ENCODE measurements at regions of chr6 and their contacts with region 1.

Region 1: DNA sequence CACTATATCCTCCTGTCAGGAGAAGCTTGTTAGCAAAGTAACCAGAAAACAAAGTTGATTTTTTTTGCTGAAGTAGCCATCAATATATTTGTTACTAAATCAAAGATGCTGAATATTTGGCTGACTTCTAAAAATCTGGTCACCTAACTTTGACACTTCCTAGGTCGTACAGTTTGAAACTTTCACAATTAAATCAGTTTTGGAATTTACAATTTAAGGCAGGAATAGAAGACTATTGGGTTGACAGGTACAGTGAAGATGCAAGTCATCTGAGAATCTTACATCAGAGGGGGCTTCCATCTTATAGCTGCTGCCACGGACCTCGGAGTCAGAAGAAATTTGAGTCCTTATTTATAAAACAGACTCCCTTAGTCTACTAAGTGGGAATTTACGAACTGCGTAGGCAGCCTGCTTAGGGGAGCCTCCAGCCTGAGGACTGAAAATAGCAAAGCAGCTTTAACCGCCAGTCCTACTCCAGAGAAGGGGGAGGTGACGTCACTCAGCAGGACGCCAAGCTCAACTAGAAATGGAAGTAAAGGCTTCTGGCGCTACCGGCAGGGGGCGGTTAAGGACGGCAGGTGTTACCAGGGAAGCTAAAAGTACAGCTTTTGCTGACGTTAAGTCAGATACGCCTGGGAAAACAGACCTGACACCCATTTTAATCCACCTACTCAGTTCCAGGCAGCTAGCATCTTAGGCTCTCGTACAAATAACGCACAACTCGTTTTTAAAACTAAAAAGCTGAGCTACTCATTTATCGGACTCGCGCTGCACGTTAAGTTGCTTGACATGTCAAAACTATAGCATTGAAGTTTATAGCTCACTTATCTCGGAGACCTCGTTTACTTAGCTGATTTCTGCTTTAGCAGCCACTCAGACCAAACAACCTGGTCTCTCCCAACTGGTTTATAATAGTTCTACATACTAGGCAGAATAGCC is 61.1 kb upstream of the HFE start:
- DNase-seq: peak; percentile 97
- ATAC-seq: peak; percentile 68
- H3K4me3 ChIP-seq: peak overlapping the region; percentile 59 to 80 (median 71)
- H3K27ac ChIP-seq: peak overlapping the region; percentile 93
- H3K4me1 ChIP-seq: peaks cover 62% of the 10 kb centered on the region
- H3K27me3 ChIP-seq: no peaks in the 10 kb centered on the region; a peak in 1 of 5 replicates
- CTCF ChIP-seq: peak; percentile 95
- EP300 ChIP-seq: peak in 1 of 2 experiments; percentile 54; a peak in 2 of 4 replicates
- POLR2A ChIP-seq: peak in 1 of 2 experiments; percentile 28; a peak in 1 of 4 replicates
- RAD21 ChIP-seq: peak; percentile 77

Region 2: GRCh38 chr6:24936641-24937317 is 1089.4 kb before region 1 on chr6:
- CTCF ChIA-PET with region 1: no interaction called
- POLR2A ChIA-PET with region 1: no interaction called
- in situ Hi-C with region 1: no loop called
- intact Hi-C with region 1: no loop called
- DNase-seq: no peak
- ATAC-seq: no peak
- H3K4me3 ChIP-seq: no peak overlapping the region
- H3K27ac ChIP-seq: no peak overlapping the region
- H3K4me1 ChIP-seq: no peaks in the 10 kb centered on the region
- H3K27me3 ChIP-seq: peaks cover 0 to 10% of the 10 kb centered on the region in 2 experiments; a peak in 2 of 5 replicates
- CTCF ChIP-seq: no peak
- EP300 ChIP-seq: no peak
- POLR2A ChIP-seq: no peak
- RAD21 ChIP-seq: no peak

Region 3: DNA sequence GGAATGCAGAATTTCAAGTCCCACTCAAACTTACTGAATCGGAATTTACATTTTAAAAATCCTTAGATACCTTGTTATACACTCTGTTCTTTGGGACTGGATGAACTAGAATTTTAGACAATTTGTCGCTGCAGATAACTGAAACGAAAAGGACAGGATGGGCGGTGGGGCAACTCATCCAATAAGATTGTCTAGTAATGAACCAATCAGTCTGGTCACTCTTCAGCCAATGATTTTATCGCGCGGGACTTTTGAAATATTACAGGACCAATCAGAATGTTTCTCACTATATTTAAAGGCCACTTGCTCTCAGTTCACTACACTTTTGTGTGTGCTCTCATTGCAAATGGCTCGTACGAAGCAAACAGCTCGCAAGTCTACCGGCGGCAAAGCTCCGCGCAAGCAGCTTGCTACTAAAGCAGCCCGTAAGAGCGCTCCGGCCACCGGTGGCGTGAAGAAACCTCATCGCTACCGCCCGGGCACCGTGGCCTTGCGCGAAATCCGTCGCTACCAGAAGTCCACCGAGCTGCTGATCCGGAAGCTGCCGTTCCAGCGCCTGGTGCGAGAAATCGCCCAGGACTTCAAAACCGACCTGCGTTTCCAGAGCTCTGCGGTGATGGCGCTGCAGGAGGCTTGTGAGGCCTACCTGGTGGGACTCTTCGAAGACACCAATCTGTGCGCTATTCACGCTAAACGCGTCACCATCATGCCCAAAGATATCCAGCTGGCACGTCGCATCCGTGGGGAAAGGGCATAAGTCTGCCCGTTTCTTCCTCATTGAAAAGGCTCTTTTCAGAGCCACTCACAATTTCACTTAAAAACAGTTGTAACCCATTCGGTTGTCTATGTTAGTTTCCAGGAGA is 19.1 kb after region 1 on chr6:
- CTCF ChIA-PET with region 1: no interaction called
- POLR2A ChIA-PET with region 1: interaction called, 322 read pairs
- in situ Hi-C with region 1: no loop called
- intact Hi-C with region 1: loop called (anchors 1 kb)
- DNase-seq: peak; percentile 99
- ATAC-seq: peak; percentile 74
- H3K4me3 ChIP-seq: peak overlapping the region; percentile 58 to 73 (median 63)
- H3K27ac ChIP-seq: peak overlapping the region; percentile 94
- H3K4me1 ChIP-seq: peaks cover 31% of the 10 kb centered on the region
- H3K27me3 ChIP-seq: no peaks in the 10 kb centered on the region; a peak in 1 of 5 replicates
- CTCF ChIP-seq: peak; percentile 62
- EP300 ChIP-seq: peak in 1 of 2 experiments; percentile 44; a peak in 2 of 4 replicates
- POLR2A ChIP-seq: peak; percentile 98 to 100
- RAD21 ChIP-seq: peak; percentile 69

Region 4: DNA sequence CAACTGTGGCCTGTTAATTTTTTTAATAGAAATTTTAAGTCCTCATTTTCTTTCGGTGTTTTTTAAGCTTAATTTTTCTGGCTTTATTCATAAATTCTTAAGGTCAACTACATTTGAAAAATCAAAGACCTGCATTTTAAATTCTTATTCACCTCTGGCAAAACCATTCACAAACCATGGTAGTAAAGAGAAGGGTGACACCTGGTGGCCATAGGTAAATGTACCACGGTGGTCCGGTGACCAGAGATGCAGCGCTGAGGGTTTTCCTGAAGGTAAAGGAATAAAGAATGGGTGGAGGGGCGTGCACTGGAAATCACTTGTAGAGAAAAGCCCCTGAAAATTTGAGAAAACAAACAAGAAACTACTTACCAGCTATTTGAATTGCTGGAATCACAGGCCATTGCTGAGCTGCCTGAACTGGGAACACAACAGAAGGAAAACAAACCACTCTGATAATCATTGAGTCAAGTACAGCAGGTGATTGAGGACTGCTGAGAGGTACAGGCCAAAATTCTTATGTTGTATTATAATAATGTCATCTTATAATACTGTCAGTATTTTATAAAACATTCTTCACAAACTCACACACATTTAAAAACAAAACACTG is 71.2 kb after region 1 on chr6:
- CTCF ChIA-PET with region 1: interaction called, 4 read pairs
- POLR2A ChIA-PET with region 1: interaction called, 3 read pairs
- in situ Hi-C with region 1: no loop called
- intact Hi-C with region 1: loop called (anchors 1 kb)
- DNase-seq: peak; percentile 75
- ATAC-seq: peak; percentile 93
- H3K4me3 ChIP-seq: no peak overlapping the region
- H3K27ac ChIP-seq: no peak overlapping the region
- H3K4me1 ChIP-seq: peaks cover 1% of the 10 kb centered on the region
- H3K27me3 ChIP-seq: no peaks in the 10 kb centered on the region
- CTCF ChIP-seq: peak; percentile 86
- EP300 ChIP-seq: no peak
- POLR2A ChIP-seq: no peak
- RAD21 ChIP-seq: peak; percentile 82

Region 5: DNA sequence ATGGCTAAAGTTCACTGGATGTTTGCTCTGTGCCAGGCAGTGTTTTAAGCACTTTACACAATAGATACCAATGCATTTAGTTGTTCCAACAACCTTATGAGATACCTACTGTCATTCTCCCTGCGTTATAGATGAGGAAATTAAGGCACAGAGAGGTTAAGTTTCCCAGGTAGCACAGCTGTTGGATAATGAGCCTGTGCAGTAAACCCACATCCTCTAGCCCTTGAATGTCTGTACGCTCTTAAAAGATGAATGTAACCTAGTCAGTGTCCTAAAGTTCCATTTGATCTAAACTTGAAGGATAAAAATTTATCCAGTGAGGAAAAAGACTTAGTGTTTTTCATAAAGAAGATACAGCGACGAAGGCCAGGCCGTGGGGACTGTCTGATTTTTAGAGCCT is 89.1 kb after region 1 on chr6:
- CTCF ChIA-PET with region 1: no interaction called
- POLR2A ChIA-PET with region 1: no interaction called
- in situ Hi-C with region 1: no loop called
- intact Hi-C with region 1: no loop called
- DNase-seq: no peak
- ATAC-seq: no peak
- H3K4me3 ChIP-seq: no peak overlapping the region
- H3K27ac ChIP-seq: no peak overlapping the region
- H3K4me1 ChIP-seq: peaks cover 35% of the 10 kb centered on the region
- H3K27me3 ChIP-seq: no peaks in the 10 kb centered on the region
- CTCF ChIP-seq: no peak
- EP300 ChIP-seq: no peak
- POLR2A ChIP-seq: no peak
- RAD21 ChIP-seq: no peak

Region 6: DNA sequence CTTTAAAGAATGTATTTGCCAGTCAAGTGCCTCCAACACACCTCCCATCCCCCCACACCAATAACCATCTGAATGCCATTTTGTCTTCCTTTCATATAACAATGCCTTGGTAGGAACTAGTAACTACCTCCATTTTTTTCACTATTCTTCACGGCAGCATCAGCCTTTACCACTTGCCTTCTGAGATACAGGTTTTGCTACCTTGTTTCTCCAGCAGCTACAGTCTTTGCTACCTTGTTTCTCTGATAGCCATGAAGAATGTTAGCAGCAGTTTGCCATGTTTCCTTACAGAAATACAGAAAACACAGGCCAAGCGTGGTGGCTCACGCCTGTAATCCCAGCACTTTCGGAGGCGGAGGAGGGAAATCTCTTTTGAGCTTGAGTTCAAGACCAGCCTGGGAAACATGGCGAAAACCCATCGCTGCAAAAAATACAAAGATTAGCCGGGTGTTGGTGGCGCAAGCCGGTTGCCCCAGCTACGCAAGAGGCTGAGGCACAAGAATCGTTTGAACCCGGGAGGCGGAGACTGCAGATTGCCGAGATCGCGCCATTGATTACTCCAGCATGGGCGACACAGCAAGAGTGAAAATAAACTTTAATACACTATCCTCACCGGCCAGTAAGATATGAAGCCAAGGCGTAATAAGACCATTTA is 161.9 kb after region 1 on chr6:
- CTCF ChIA-PET with region 1: no interaction called
- POLR2A ChIA-PET with region 1: interaction called, 12 read pairs
- in situ Hi-C with region 1: no loop called
- intact Hi-C with region 1: no loop called
- DNase-seq: peak; percentile 76
- ATAC-seq: peak; percentile 63
- H3K4me3 ChIP-seq: peak overlapping the region; percentile 60 to 77 (median 62)
- H3K27ac ChIP-seq: peak overlapping the region; percentile 82
- H3K4me1 ChIP-seq: peaks cover 18% of the 10 kb centered on the region
- H3K27me3 ChIP-seq: no peaks in the 10 kb centered on the region
- CTCF ChIP-seq: no peak
- EP300 ChIP-seq: no peak
- POLR2A ChIP-seq: no peak
- RAD21 ChIP-seq: no peak

Region 7: DNA sequence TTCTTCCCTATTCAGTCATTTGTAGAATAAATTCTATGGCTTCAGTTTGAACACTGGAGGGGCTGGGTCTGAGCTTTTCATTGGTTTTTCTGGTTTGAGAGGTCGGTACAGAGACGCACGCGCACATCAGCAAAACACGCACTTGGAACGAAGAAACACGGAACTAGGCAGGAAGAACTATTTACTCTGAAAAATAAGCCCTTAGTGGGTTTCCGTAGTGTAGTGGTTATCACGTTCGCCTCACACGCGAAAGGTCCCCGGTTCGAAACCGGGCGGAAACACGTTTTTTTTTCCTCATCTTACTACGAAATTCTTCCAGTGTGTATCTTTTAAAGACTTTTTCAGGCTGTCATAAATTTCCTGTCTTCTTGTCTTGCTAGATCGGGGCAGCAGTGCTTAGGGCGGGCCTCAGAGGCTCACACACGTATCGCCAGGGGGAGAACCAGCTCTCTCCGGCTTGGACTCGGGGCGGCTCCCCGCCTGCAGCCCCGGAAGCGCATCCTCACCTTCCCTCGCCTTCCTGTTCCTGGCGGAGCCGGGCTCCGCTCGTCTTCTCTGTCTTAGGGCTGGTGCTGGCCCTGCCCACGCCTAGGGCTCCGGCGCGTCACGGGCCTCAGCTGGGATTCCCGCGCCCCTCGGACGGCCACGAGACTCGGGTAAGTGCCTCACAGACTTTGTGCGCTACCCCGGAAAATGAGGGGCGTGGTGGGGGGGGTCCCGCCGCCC is 511.8 kb after region 1 on chr6 and contains the start of gene HMGN4:
- CTCF ChIA-PET with region 1: no interaction called
- POLR2A ChIA-PET with region 1: no interaction called
- in situ Hi-C with region 1: no loop called
- intact Hi-C with region 1: loop called (anchors 10 kb)
- DNase-seq: peak; percentile 92
- ATAC-seq: peak; percentile 85
- H3K4me3 ChIP-seq: peak within 1 kb of the TSS; percentile 83 to 89 (median 83)
- H3K27ac ChIP-seq: peak within 1 kb of the TSS; percentile 74
- H3K4me1 ChIP-seq: peaks cover 39% of the 10 kb centered on the region
- H3K27me3 ChIP-seq: no peaks in the 10 kb centered on the region
- CTCF ChIP-seq: peak; percentile 48
- EP300 ChIP-seq: no peak
- POLR2A ChIP-seq: peak; percentile 54 to 83; a peak in 3 of 4 replicates
- RAD21 ChIP-seq: peak; percentile 32; the same call in 1 of the 2 replicates
- total RNA-seq, gene HMGN4: 52.1 and 79.1 TPM in 2 replicates